ENCODE measurements at regions of chr2 and their contacts with region 1.

Region 1: GRCh38 chr2:112433932-112434730 is 686 bp upstream of the RGPD8 start:
- DNase-seq: peak in 2 of 3 donors; percentile 46 to 58
- ATAC-seq: peak in 1 of 2 donors; percentile 5
- H3K4me3 ChIP-seq: no peak overlapping the region
- H3K27ac ChIP-seq: no peak overlapping the region
- H3K4me1 ChIP-seq: no peaks in the 10 kb centered on the region
- H3K27me3 ChIP-seq: no peaks in the 10 kb centered on the region

Region 2: GRCh38 chr2:112138159-112138773 is 295.9 kb before region 1 on chr2 and contains the start of gene FBLN7:
- intact Hi-C with region 1: loop called in 1 of 4 experiments (anchors 10 kb)
- DNase-seq: peak in 1 of 3 donors; percentile 66
- ATAC-seq: peak; percentile 59 to 64
- H3K4me3 ChIP-seq: peak within 1 kb of the TSS; percentile 77
- H3K27ac ChIP-seq: no peak within 1 kb of the TSS
- H3K4me1 ChIP-seq: no peaks in the 10 kb centered on the region
- H3K27me3 ChIP-seq: no peaks in the 10 kb centered on the region
- total RNA-seq, gene FBLN7: 1.5 to 1.9 (median 1.7) TPM

Region 3: GRCh38 chr2:113078350-113078839 is 644.3 kb after region 1 on chr2:
- intact Hi-C with region 1: no loop called
- DNase-seq: no peak
- ATAC-seq: no peak
- H3K4me3 ChIP-seq: no peak overlapping the region
- H3K27ac ChIP-seq: no peak overlapping the region
- H3K4me1 ChIP-seq: no peaks in the 10 kb centered on the region
- H3K27me3 ChIP-seq: no peaks in the 10 kb centered on the region